Ascending aorta (tissue), 2 donors: ENCODE measurements at regions of chr1 and their contacts with region 1.

Region 1: GRCh38 chr1:219385786-219386427 is 212.2 kb downstream of the LYPLAL1 start:
- DNase-seq: peak in 1 of 2 donors; percentile 62
- H3K4me3 ChIP-seq: no peak overlapping the region
- H3K27ac ChIP-seq: no peak overlapping the region
- H3K4me1 ChIP-seq: no peaks in the 10 kb centered on the region
- H3K27me3 ChIP-seq: no peaks in the 10 kb centered on the region
- CTCF ChIP-seq: peak; percentile 28 to 68 (median 48)

Region 2: DNA sequence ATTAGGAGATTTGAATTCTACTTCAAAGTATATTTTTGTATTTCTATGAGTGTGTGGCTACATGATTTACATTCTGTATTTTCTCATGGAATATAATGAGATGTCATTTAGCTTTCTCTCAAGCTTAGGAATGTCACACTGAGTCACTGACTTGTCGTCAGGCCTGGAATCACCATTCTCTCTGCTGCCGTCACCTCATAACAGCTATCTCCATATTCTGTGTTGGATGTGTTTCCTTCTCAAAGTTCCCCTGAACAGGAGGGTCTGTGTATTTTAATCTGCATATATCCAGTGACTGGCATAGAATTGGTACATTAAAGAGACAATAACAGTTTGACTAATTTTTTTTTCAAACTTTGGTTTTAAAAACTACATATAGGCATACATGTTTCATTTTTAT is 176.3 kb before region 1 on chr1:
- intact Hi-C with region 1: loop called (anchors 10 kb)
- DNase-seq: no peak
- H3K4me3 ChIP-seq: no peak overlapping the region
- H3K27ac ChIP-seq: no peak overlapping the region
- H3K4me1 ChIP-seq: no peaks in the 10 kb centered on the region
- H3K27me3 ChIP-seq: no peaks in the 10 kb centered on the region
- CTCF ChIP-seq: no peak

Region 3: DNA sequence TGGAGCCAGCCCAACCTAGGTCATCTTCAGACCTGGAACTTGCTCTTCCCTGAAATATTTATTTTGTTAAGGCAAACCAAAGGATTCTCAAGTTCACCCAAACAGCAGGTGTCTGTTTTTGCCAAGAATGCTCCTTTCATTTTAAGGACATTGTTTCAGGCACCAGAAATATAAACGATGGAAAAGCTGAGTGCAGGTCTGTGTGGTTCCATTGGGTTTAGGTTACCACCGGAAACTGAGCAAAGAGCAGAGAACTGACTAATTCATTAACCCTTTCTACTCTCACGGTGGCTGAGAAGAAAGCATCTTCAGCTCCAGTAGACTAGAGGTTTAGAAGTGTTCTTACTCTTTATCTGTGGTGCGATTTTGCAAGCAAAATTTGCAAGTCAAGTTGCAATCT is 265.0 kb after region 1 on chr1:
- intact Hi-C with region 1: no loop called
- DNase-seq: no peak
- H3K4me3 ChIP-seq: no peak overlapping the region
- H3K27ac ChIP-seq: no peak overlapping the region
- H3K4me1 ChIP-seq: no peaks in the 10 kb centered on the region
- H3K27me3 ChIP-seq: no peaks in the 10 kb centered on the region
- CTCF ChIP-seq: no peak